Posterior cingulate gyrus (tissue), 11 donors: ENCODE measurements at regions of chr1 and their contacts with region 1.

Region 1: DNA sequence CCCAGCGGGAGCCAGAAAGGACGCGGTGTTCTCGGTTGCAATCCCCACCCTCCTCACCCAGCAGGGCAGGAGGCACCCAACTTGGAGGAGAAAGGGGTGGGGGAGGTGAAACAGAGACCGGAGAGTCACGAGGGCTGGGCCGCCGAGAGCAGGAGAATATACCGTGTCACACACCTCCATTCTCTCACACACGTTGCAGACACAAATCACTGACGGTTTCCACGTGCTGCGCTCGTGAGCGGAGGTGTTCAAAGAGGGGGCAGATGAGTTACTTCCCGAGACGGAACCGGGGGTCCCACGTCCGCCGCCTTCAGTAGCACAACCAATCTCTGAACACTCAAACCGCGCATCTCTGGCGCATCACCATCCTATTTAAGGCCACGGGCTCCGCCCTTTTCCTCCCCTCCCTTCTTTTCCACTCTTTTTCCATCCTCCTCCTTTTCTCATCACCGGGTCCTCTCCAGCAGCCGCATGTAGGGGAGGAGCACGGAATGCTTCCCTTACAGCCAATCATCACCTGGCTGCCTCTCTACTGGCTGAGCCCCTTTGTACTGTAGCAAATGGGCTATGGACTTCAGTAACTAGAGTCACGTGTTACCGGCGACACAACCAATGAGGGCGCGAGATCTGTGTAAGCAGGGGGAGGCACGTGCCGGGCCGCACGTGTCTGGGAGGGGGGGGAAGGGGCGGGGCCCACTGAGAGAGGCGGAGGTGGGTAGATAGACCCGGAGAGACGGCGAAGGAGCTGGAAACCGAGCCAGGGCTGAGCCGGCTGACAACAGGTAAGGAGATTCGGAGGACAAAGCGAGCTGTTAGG is at the start of gene CIART:
- DNase-seq: peak; percentile 84 to 99 (median 94)

Region 2: GRCh38 chr1:150256554-150257341 is 25.3 kb before region 1 on chr1:
- intact Hi-C with region 1: loop called (anchors 1 kb)
- DNase-seq: peak in 9 of 10 donors; percentile 55 to 96 (median 79)

Region 3: DNA sequence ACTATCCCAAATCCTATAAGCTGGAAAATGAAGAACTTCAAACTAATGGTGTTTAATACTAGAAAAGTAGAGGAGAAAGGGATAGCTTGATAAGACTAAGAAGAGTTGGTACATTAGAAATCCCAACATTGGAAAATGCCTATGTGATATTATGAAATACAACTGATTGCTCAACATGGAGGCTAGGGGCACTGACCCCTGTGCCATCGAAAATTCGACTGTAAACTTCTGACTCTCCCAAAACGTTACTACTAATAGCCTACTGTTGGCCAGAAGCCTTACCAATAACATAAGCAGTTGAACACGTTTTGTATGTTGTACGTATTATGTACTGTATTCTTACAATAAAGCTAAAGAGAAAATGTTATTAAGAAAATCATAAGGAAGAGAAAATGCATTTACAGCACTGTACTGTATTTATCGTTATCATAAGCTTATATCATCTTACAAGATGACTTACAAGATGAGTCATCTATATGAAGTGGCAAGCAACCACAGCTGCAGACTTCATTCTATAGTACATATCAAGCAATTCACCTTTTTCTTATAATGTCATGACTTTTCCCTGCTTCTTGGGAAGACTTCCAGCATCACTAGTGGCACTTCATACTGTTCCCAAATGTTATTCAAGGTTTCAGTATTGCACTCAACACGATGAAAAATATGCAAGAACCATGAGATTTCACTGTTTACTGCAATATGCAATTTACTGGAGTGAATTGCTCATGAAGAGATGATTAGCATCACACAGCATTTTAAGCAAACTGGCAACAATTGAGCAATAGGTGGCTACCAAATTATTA is 538.9 kb after region 1 on chr1:
- intact Hi-C with region 1: no loop called
- DNase-seq: no peak